ENCODE measurements at regions of chr6 and their contacts with region 1.

Region 1: DNA sequence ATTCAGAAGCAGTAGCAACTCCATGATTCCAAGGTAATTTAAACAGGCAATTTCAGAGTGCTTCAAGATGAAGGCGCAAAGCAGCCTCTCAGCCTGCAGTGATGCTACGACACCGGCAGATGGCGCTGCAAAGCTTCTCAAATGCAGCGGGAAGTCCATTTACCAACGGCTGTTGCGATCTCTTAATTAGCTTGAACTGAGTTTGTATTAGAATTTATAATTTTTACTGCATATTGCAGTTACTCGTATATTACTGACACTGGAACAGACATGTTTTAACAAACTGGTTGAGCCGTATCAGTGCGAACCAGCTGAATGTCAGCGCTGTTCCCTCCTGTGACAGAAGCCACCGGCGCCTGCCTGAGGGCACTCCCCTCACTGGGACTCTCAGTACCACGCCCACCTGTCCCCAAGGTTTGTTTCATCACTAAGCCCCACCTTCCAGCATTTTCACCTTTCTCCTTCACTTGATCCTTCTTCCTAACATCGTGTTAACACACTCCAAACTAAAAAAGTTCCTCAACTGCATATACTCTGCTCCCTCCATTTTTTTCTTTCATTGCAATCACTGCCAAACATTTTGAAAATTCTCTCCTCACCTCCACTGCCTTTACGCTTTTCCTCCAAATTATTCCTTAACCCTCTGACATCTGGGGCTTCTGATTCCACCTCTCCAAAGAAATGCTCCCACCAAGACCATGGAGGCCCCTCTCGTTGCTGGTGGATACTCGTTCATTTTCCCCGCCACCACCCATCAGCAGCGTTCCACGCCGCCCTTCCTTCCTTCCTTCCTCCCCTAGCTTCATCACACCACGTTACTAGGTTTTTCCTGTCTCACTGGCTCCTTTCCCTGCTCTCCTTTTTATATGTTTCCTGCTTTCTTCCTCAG is 14.5 kb downstream of the GNL1 start:
- DNase-seq: peak in 1 of 2 donors; percentile 65
- H3K4me3 ChIP-seq: peak overlapping the region; percentile 11 to 41
- H3K27ac ChIP-seq: no peak overlapping the region
- H3K4me1 ChIP-seq: peaks cover 0 to 6% (median 2%) of the 10 kb centered on the region in 4 donors
- H3K27me3 ChIP-seq: no peaks in the 10 kb centered on the region
- CTCF ChIP-seq: peak; percentile 88 to 96

Region 2: DNA sequence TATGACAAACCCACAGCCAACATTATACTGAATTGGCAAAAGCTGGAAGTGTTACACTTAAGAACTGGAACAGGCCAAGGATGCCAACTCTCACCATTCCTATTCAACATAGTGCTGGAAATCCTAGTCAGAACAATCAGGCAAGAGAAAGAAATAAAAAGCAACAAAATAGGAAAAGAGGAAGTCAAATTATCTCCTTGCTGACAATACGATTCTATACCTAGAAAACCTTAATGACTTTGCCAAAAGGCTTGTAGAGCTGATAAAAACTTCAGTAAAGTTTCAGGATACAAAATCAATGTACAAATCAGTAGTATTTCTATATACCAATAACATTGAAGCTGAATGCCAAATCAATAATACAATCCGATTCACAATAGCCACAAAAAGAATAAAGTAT is 1205.5 kb before region 1 on chr6:
- intact Hi-C with region 1: no loop called
- DNase-seq: no peak
- H3K4me3 ChIP-seq: no peak overlapping the region
- H3K27ac ChIP-seq: no peak overlapping the region
- H3K4me1 ChIP-seq: no peaks in the 10 kb centered on the region
- H3K27me3 ChIP-seq: no peaks in the 10 kb centered on the region
- CTCF ChIP-seq: no peak

Region 3: GRCh38 chr6:30483677-30484279 is 58.0 kb before region 1 on chr6:
- intact Hi-C with region 1: loop called (anchors 5 kb)
- DNase-seq: no peak
- H3K4me3 ChIP-seq: no peak overlapping the region
- H3K27ac ChIP-seq: no peak overlapping the region
- H3K4me1 ChIP-seq: peaks cover 0 to 5% (median 2%) of the 10 kb centered on the region in 4 donors
- H3K27me3 ChIP-seq: peaks cover 0 to 37% of the 10 kb centered on the region in 2 donors
- CTCF ChIP-seq: peak; percentile 53 to 69

Region 4: GRCh38 chr6:30599625-30600324 is 58.0 kb after region 1 on chr6:
- intact Hi-C with region 1: loop called (anchors 5 kb)
- DNase-seq: no peak
- H3K4me3 ChIP-seq: no peak overlapping the region
- H3K27ac ChIP-seq: no peak overlapping the region
- H3K4me1 ChIP-seq: no peaks in the 10 kb centered on the region
- H3K27me3 ChIP-seq: no peaks in the 10 kb centered on the region
- CTCF ChIP-seq: no peak